ENCODE measurements at regions of chr12 and their contacts with region 1.

Region 1: GRCh38 chr12:6104027-6104426 is 20.4 kb downstream of the VWF start:
- DNase-seq: no peak
- H3K4me3 ChIP-seq: no peak overlapping the region
- H3K27ac ChIP-seq: no peak overlapping the region
- H3K4me1 ChIP-seq: no peaks in the 10 kb centered on the region
- H3K27me3 ChIP-seq: no peaks in the 10 kb centered on the region
- CTCF ChIP-seq: no peak

Region 2: GRCh38 chr12:6140651-6141447 is 36.8 kb after region 1 on chr12:
- CTCF ChIA-PET with region 1: no interaction called
- POLR2A ChIA-PET with region 1: no interaction called
- intact Hi-C with region 1: loop called (anchors 5 kb)
- DNase-seq: no peak
- H3K4me3 ChIP-seq: no peak overlapping the region
- H3K27ac ChIP-seq: no peak overlapping the region
- H3K4me1 ChIP-seq: no peaks in the 10 kb centered on the region
- H3K27me3 ChIP-seq: no peaks in the 10 kb centered on the region
- CTCF ChIP-seq: no peak

Measured in PC-9 (cell line).